ENCODE measurements at regions of chr1 and their contacts with region 1.

Region 1: GRCh38 chr1:10209905-10210810 is at the start of gene KIF1B:
- DNase-seq: peak; percentile 99
- ATAC-seq: peak; percentile 96
- total RNA-seq, gene KIF1B: 66.8 TPM

Region 2: GRCh38 chr1:10074059-10074851 is 135.9 kb before region 1 on chr1:
- intact Hi-C with region 1: no loop called
- DNase-seq: no peak
- ATAC-seq: peak; percentile 25

Region 3: DNA sequence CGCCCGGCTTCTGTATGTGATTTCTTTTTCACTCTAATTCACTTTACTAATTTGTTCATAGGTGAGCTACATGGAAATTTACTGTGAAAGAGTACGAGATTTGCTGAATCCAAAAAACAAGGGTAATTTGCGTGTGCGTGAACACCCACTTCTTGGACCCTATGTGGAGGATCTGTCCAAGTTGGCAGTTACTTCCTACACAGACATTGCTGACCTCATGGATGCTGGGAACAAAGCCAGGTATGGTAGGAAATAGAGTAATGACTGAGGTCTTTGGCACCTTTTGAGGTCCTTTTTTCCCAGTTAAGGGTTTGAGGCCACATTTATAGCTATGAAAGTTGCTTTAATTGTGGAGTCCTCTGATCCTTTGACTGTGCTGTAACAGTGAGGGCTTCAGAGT is 57.2 kb after region 1 on chr1:
- intact Hi-C with region 1: loop called (anchors 10 kb)
- DNase-seq: no peak
- ATAC-seq: peak; percentile 58

Region 4: DNA sequence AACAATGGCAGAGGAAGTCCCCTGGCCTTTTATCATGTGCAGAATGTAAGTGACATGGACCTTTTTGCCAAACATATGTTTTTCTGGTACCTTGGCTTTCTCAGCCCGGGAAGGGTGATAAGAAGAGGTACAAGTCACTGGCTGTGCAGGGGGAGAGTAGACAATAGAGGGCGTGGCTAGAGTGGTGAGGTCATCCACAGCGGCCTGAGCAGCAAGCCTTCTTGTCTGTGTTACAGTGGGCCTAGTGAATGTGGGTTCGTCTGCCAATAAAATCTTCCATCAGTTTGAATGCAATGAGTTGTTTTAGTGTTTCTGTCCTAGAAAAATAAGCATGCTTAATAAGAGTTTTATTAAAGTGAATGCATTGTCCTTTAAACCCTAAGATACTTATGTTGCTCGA is 129.7 kb after region 1 on chr1:
- intact Hi-C with region 1: loop called (anchors 1 kb)
- DNase-seq: peak; percentile 58
- ATAC-seq: peak; percentile 93